Right ventricle myocardium inferior (tissue), 1 donor: ENCODE measurements at regions of chr20 and their contacts with region 1.

Region 1: GRCh38 chr20:574297-575134 is 30.9 kb upstream of the CSNK2A1 start:
- DNase-seq: no peak
- ATAC-seq: no peak

Region 2: DNA sequence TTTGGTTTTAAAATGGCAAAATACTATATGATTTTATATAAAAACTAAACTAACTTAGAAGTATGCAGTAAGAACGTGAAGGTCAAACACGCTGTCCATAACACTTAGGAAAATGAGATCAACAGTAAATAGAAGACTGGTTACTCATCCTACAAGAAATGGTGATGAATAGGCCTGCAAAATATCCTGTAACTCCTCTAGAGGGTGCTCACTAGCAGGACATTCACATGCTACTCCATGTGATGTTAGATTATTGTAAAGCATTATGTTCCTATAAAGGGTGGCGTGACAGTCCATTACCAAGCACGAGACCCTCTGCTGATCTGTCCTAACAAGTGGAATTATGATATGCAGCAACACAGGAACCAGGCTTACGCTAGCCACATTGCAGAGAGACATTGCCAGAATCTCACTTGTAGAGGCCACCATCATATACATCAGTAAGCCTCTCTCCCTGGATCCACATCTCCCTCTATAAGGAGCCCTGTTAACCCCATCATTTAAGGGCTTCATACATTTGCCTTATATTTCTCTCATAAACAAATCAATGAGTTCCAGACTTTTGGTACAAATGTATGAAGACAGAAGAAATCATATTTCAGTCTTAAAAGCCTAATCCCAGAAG is 365.5 kb before region 1 on chr20:
- intact Hi-C with region 1: no loop called
- DNase-seq: no peak
- ATAC-seq: peak; percentile 60

Region 3: DNA sequence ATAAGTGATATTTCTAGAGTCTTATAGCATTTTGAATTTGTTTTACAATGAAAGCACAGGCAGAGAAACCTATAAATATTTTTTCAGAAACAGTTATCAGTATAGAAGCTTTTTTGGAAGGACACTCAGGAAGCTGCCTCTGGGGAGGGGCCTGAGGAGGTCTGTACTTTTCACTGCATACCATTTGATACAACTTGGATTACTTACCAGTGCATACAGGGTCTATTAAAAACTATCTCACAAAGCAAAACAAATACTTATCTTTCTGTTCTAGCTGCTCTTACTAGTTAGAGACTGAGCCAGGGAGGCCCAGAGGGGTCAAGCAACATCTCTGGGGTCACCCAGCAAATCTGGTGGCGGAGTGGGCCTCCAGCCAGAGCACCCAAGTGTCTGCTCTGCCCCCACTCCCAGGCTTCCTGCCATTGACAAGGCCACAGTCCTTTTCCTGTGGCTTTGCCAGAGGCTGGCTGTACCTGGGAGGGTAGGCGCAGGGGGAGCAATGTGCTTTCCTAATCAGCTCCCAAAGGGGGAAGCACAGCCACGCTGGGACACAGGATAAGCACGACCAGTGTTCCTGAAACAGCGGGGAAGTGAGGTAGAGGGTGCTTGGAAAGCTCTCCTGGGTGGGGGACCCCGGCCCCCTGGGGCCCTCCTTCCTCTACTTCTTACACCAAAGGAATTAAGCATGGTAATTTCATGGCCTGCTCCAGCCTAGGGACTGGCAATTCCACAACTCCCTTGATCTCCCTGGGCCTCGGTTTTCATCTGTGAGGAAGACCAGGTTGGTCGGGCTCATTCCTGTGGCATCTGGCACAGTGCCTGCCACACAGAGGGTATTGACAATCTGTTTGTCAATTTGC is 27.8 kb after region 1 on chr20:
- intact Hi-C with region 1: loop called (anchors 1 kb)
- DNase-seq: peak; percentile 85
- ATAC-seq: peak; percentile 77